CD4-positive, alpha-beta memory T cell (primary cell): ENCODE measurements at regions of chr10 and their contacts with region 1.

Region 1: DNA sequence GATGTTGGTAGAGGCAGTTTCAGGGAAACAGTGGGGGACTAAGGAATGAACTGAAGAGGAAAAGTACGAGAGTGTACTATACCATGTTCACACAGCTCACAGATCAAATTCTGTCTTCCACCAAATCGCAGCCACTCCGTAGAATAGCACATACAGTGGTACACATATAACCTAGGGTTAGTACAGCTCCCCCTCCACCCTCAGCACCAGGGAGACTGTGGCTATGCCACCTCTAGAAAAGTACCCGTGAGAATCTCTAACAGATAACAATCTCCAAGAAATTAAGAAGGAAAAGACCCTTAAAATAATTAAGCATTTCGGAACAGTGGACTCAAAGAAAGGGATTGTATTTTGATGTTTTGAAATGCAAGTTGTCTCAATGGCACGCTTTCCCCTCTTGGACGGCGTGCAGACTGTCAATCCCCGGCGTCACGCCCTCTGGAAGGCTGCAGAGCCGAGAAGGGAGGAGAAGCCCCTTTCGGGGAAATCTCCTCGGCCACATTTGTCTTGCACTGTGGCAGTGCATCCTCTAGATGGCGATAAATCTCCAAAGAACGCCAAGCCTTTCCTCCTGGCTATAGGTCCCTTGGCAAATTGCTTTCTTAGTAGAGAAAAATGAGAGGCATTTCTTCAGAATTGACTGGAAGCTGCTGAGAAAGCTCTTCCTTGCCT is 345.0 kb downstream of the REEP3 start:
- DNase-seq: peak in 4 of 5 donors; percentile 12 to 28 (median 26)
- H3K4me3 ChIP-seq: no peak overlapping the region
- H3K4me3 Mint-ChIP-seq: peak overlapping the region in 6 of 8 donors; percentile 7 to 45 (median 24)
- H3K27ac ChIP-seq: no peak overlapping the region
- H3K27ac Mint-ChIP-seq: no peak overlapping the region
- H3K4me1 ChIP-seq: peaks cover 11% of the 10 kb centered on the region
- H3K4me1 Mint-ChIP-seq: peaks cover 6 to 14% (median 9%) of the 10 kb centered on the region in 4 donors
- H3K27me3 ChIP-seq: no peaks in the 10 kb centered on the region
- H3K27me3 Mint-ChIP-seq: peaks cover 18 to 27% of the 10 kb centered on the region in 2 donors

Region 2: DNA sequence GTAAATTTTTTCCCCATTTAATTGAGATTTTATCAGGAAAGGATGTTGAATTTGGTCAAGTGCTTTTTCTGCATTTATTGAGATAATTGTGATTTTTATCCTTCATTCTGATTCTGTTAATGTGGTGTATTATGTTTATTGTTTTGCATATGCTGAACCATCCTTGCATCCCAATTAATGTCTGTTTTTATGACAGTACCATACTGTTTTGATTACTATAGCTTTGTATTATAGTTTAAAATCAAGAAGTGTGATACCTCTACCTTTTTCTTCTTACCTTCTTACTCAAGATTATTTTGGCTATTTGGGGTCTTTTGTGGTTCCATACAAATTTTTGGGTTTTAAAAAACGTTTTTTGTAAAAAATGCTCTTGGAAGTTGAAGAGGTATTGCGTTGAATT is 12.2 kb after region 1 on chr10:
- CTCF ChIA-PET with region 1: interaction called, 17 read pairs
- POLR2A ChIA-PET with region 1: no interaction called
- intact Hi-C with region 1: no loop called
- DNase-seq: no peak
- H3K4me3 ChIP-seq: no peak overlapping the region
- H3K4me3 Mint-ChIP-seq: no peak overlapping the region
- H3K27ac ChIP-seq: no peak overlapping the region
- H3K27ac Mint-ChIP-seq: no peak overlapping the region
- H3K4me1 ChIP-seq: no peaks in the 10 kb centered on the region
- H3K4me1 Mint-ChIP-seq: no peaks in the 10 kb centered on the region
- H3K27me3 ChIP-seq: no peaks in the 10 kb centered on the region
- H3K27me3 Mint-ChIP-seq: peaks cover 0 to 11% of the 10 kb centered on the region in 2 donors

Region 3: GRCh38 chr10:63976538-63976937 is 110.3 kb after region 1 on chr10:
- CTCF ChIA-PET with region 1: interaction called, 4 read pairs
- POLR2A ChIA-PET with region 1: no interaction called
- intact Hi-C with region 1: loop called (anchors 2 kb)
- DNase-seq: peak in 1 of 5 donors; percentile 3
- H3K4me3 ChIP-seq: no peak overlapping the region
- H3K4me3 Mint-ChIP-seq: no peak overlapping the region
- H3K27ac ChIP-seq: no peak overlapping the region
- H3K27ac Mint-ChIP-seq: no peak overlapping the region
- H3K4me1 ChIP-seq: no peaks in the 10 kb centered on the region
- H3K4me1 Mint-ChIP-seq: no peaks in the 10 kb centered on the region
- H3K27me3 ChIP-seq: no peaks in the 10 kb centered on the region
- H3K27me3 Mint-ChIP-seq: no peaks in the 10 kb centered on the region